ENCODE measurements at regions of chr10 and their contacts with region 1.

Region 1: DNA sequence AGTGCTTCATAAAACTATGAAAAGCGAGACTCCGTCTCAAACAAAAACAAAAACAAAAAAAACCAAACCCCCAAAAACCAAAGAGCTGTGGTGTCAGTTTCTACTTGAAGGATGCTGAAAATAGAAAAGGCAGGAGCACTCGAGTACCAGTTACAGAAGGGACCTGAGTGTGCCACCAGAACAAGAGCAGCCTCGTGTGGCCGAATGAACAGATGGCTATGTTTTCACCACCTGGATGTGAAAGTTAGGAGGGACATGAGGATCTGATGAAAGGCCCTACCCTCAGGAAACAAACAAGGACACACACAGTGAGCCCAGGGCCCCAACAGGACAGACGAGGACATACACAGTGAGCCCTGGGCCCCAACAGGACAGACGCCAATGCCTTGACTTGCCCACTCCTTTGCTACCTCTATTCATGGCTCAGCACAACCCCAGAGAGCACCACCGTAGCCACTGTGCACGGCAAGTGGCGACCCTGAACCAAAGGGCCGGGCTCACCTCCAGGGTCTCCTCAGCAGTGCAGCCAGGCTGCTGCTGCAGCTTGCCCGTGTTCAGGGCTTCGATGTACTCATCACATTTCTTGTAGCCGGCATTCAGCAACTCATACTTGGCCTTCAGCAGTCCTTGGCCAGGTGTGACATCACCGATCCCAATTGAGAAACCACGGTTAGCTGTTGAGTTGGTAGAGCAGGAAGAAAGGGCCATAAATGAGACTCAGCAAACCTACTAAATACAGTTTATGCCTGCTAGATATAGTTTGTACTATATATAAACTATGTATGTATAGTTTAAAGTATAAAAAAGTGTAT is 24.9 kb downstream of the POLR3A start:
- DNase-seq: no peak
- ATAC-seq: no peak
- H3K4me3 ChIP-seq: no peak overlapping the region
- H3K4me1 ChIP-seq: no peaks in the 10 kb centered on the region
- CTCF ChIP-seq: no peak

Region 2: DNA sequence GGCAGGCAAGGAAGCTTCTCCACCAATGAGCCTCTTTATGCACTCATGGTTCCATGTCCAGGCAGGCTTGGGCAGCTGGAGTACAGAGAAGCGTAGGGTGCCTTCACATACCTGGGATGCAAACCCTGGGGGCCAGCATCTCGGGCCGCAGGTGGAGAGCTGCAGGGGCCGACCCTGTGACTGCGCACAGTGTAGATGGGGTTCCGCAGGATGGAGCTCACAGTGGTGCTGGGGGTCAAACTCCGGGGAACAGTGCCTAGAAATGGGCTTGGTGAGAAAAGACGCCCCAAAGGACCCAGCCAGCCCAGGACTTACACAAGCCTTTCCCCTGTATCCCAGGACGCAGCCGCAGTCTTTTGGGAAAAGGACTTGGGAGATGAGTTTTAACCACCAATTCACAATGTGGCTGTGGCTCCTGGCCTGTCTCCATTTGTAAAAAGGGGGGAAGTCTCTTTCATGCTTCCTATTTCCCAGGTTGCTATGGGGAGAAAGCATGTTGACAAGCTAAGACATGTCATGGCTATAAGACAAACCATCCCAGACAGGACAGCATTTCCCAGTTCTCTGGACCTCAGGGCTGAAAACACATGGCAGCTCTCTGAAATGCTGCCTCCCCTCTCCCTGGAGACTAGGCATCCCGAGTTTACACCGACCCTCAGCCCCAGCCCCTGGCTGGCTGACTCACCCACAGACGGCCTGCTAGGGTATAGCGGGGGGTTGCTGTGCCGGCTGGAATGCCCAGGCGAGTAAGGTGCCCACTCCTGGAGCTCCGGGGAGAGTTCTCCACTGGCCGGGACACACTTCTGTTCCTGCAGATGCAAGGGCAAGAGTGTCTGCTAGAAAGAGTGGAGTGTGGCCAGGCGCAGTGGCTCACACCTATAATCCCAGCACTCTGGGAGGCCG is 185.0 kb before region 1 on chr10:
- intact Hi-C with region 1: loop called in 1 of 2 experiments (anchors 10 kb)
- DNase-seq: no peak
- ATAC-seq: no peak
- H3K4me3 ChIP-seq: no peak overlapping the region
- H3K4me1 ChIP-seq: no peaks in the 10 kb centered on the region
- CTCF ChIP-seq: no peak

Region 3: DNA sequence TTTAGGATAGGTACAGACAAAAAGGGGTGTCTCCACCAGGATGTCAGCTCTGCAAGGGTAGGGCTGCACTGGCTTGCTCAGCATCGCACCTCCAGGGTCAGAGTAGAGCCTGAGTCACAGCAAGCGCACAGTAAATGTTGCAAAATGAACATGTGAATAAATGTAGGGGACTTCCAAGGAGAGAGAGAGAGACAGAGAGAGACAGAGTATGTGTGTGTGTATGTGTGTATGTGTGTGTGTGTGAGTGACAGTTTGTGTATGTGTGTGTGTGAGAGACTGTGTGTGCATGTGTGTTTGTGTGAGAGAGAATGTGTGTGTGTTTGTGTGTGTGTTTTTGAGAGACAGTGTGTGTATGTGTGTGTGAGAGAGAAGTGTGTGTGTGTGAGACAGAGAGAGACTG is 192.5 kb after region 1 on chr10:
- intact Hi-C with region 1: no loop called
- DNase-seq: no peak
- ATAC-seq: no peak
- H3K4me3 ChIP-seq: no peak overlapping the region
- H3K4me1 ChIP-seq: no peaks in the 10 kb centered on the region
- CTCF ChIP-seq: no peak

Measured in mucosa of descending colon (tissue), 3 donors.